Panc1 (cell line): ENCODE measurements at regions of chr2 and their contacts with region 1.

Region 1: GRCh38 chr2:150487537-150488429 is at the start of gene RND3:
- DNase-seq: peak; percentile 96
- ATAC-seq: peak; percentile 78
- H3K4me3 ChIP-seq: peak within 1 kb of the TSS; percentile 88 to 89
- H3K27ac ChIP-seq: peak within 1 kb of the TSS; percentile 92
- H3K4me1 ChIP-seq: peaks cover 18% of the 10 kb centered on the region
- H3K27me3 ChIP-seq: no peaks in the 10 kb centered on the region; the same call in 1 of the 2 replicates
- CTCF ChIP-seq: peak; percentile 90
- total RNA-seq, gene RND3: 45.3 TPM

Region 2: DNA sequence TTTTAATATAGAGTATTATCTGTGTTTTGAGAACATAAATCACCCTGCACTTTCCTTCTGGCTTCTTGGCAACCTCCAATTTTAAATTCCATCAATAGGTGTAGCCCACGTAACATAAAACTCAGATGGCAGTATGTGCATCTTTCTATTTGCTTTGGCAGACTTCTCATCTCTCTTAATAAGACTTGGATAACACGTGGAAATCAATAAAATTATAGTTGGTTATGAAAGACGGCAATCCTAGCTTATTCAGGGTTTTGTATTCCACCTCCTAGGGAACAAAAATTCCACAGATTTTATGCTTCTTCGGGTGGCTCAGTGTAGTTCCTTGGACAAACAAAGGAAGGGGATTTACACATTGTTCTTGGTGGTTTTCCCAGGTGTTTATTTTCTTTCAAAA is 299.6 kb before region 1 on chr2:
- CTCF ChIA-PET with region 1: no interaction called
- POLR2A ChIA-PET with region 1: no interaction called
- in situ Hi-C with region 1: no loop called
- intact Hi-C with region 1: loop called (anchors 10 kb)
- DNase-seq: no peak
- ATAC-seq: no peak; the same call in 1 of the 2 replicates
- H3K4me3 ChIP-seq: no peak overlapping the region
- H3K27ac ChIP-seq: no peak overlapping the region; the same call in 1 of the 2 replicates
- H3K4me1 ChIP-seq: peaks cover 4% of the 10 kb centered on the region; the same call in 1 of the 2 replicates
- H3K27me3 ChIP-seq: no peaks in the 10 kb centered on the region
- CTCF ChIP-seq: peak; percentile 12; the same call in 1 of the 2 replicates

Region 3: DNA sequence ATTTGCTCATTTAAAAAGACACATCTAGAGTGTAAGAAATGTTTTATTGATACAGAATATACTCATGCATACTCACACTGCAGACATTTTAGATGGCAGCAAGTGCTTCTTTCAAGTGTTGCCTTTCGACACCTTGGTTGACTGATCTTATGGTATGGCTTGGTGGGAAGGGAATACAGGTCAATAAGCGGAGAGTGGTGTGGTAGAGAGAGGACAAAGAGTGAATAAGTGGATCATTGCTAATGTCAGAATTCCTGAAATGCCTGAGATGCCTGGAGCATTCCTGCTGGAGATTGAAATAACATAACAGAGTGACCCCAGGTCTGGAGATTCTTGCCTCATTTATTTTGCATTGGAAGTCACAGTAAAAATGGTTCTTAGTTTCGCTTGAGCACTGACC is 77.0 kb before region 1 on chr2:
- CTCF ChIA-PET with region 1: no interaction called
- POLR2A ChIA-PET with region 1: no interaction called
- in situ Hi-C with region 1: no loop called
- intact Hi-C with region 1: no loop called
- DNase-seq: no peak
- ATAC-seq: peak; percentile 79
- H3K4me3 ChIP-seq: no peak overlapping the region
- H3K27ac ChIP-seq: no peak overlapping the region
- H3K4me1 ChIP-seq: peaks cover 3% of the 10 kb centered on the region; the same call in 1 of the 2 replicates
- H3K27me3 ChIP-seq: no peaks in the 10 kb centered on the region
- CTCF ChIP-seq: no peak

Region 4: DNA sequence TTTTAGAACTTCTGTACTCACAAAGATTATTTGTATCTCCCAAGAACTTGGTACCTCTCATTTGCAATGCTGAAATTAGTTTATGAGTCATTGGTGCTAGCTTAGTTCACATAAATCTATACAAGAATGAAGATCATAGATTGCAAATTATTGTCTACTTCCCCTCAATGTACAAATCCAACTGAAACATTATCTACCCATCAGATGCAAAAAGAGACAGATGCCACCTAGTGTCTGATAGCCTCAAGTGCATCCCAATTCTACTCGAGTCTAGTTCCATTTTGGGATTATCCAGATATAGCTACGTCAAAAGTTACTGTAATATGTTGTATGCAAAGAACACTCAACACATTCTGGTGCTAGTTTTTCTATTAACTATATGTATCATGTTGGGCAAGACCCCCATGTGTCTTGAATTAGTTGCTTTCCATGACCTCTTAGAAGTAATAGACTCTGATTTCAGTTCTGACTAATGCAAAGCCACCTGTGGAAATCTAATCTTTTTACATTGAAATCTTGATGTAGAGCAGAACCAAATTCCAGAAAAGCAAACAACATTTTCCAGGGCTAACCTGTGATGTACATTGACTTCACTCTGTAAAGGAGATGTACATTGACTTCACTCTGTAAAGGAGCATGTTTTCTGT is 563.9 kb after region 1 on chr2:
- CTCF ChIA-PET with region 1: no interaction called
- POLR2A ChIA-PET with region 1: no interaction called
- in situ Hi-C with region 1: no loop called
- intact Hi-C with region 1: loop called (anchors 10 kb)
- DNase-seq: peak; percentile 55
- ATAC-seq: 0 out of 2 replicates have a peak, but pooled peaks have one; percentile 65
- H3K4me3 ChIP-seq: no peak overlapping the region
- H3K27ac ChIP-seq: no peak overlapping the region
- H3K4me1 ChIP-seq: no peaks in the 10 kb centered on the region
- H3K27me3 ChIP-seq: no peaks in the 10 kb centered on the region
- CTCF ChIP-seq: peak; percentile 77; the same call in 1 of the 2 replicates

Region 5: DNA sequence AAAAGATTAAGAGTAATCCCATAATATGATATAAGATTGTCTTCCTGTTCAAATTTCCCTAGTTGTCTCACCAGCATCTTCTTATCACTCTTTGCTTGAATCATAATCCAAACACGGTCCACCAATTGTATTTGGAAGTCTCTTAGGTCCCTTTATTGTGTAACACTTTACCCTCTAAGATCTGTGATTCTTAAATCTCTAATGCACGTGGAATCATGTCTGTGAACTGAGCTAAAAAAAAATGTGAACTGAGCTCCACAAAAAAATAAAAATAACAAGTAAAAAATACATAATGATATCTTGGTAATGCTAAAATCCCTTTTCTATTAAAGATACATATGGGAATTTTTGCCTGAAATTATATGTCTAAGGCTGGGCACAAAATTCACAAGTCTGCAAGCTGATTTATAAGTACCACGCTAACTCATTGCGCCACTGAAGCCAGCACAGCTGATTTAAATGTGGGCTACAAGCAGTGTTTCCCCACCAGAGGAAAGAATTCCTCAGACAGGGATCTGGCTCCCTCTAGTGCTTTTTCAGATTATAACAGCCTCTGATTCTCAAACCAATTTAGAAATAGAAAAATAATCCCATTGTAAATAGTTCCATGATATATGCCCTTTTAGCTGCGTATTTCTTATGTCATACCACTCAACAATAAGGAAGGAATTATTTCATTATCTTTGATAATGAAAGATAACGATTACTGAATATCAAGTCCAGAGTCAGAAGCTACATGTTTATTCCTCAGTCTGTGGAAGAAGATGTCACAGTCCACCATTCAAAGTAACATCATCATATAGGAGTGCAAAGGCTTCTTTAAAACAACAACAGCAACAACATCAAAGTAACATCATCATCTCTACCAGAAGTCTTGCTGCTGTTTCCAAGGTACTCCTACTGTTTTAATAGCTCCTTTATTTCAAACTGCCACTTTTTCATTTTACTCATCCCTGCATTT is 751.0 kb after region 1 on chr2:
- CTCF ChIA-PET with region 1: no interaction called
- POLR2A ChIA-PET with region 1: no interaction called
- in situ Hi-C with region 1: no loop called
- intact Hi-C with region 1: loop called (anchors 5 kb)
- DNase-seq: no peak
- ATAC-seq: peak; percentile 81
- H3K4me3 ChIP-seq: no peak overlapping the region
- H3K27ac ChIP-seq: peak overlapping the region; percentile 15; the same call in 1 of the 2 replicates
- H3K4me1 ChIP-seq: peaks cover 6% of the 10 kb centered on the region; the same call in 1 of the 2 replicates
- H3K27me3 ChIP-seq: no peaks in the 10 kb centered on the region
- CTCF ChIP-seq: peak; percentile 89